Pancreas (tissue), 10 donors: ENCODE measurements at regions of chr6 and their contacts with region 1.

Region 1: DNA sequence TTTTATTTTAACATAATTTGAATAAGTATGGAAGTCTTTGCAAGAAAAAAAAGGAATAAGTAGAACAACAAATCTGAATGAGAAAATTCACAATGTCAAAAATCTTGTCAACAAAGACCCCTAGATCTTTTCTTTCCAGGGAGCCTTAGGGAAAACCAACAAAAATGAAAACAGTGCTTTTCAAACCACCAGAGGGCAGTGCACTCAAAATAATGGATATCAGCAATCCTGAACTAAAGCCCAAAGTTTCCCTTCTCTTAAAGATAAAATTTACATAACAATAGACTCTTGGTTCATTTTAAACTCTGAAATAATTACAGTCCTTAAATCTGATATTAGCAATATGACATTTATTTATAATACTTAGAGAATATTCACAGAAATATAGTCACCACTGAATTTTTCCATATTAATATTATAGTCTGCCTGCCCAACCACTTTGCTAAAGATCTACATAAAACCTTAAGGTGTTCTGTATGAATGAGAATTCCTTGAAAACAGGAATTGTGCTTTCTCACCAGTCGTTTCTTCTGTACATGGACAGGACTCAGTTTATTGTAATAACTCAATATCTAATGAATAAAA is 105.3 kb upstream of the BMP5 start:
- DNase-seq: no peak
- ATAC-seq: peak in 3 of 4 donors; percentile 54 to 60 (median 59)
- H3K4me3 ChIP-seq: no peak overlapping the region
- H3K27ac ChIP-seq: no peak overlapping the region
- H3K4me1 ChIP-seq: no peaks in the 10 kb centered on the region
- H3K27me3 ChIP-seq: no peaks in the 10 kb centered on the region
- CTCF ChIP-seq: peak in 3 of 4 donors; percentile 46 to 59 (median 54)

Region 2: DNA sequence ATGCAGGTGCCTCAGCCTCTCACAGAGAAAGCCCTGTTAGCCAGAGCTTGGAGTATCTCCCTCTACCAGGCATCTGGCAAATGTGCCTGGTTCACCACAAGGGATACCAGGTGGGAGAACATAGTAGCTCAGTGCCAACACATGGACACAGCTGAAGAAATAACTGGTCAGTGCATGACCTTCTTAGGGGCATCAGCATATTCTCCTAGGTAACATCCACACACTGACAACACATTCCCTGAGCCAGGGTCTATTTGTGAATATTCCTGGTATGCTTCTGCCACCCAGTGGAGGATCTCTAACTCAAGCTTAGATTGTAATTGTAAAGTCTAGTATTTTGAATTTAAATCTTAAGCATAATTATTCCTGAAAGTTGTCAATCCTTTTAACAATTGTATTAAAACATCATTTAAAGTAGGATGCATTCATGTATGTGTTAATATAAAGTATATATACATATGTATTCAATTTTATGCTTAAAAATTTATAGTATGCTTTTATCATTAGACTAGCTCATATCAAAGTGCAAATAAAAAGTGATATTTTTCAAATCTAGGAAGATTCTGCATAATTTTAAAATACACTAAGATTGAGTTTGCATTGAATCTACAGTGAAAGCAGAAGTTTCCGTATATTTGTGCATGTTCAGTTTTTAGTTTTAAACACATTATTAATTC is 311.9 kb after region 1 on chr6:
- intact Hi-C with region 1: loop called in 2 of 3 experiments (anchors 5 to 10 kb)
- DNase-seq: peak in 2 of 6 donors; percentile 15 to 23
- ATAC-seq: peak in 3 of 4 donors; percentile 77 to 82 (median 80)
- H3K4me3 ChIP-seq: no peak overlapping the region
- H3K27ac ChIP-seq: no peak overlapping the region
- H3K4me1 ChIP-seq: no peaks in the 10 kb centered on the region
- H3K27me3 ChIP-seq: no peaks in the 10 kb centered on the region
- CTCF ChIP-seq: peak in 3 of 4 donors; percentile 22 to 39 (median 29)